ENCODE measurements at regions of chrX and their contacts with region 1.

Region 1: GRCh38 chrX:57453901-57454300 is 137.9 kb upstream of the ZXDB start:
- DNase-seq: peak; percentile 51
- H3K4me3 Mint-ChIP-seq: no peak overlapping the region
- H3K27ac Mint-ChIP-seq: no peak overlapping the region
- H3K4me1 Mint-ChIP-seq: no peaks in the 10 kb centered on the region
- H3K27me3 Mint-ChIP-seq: peaks cover 21% of the 10 kb centered on the region
- CTCF ChIP-seq: peak; percentile 52

Region 2: DNA sequence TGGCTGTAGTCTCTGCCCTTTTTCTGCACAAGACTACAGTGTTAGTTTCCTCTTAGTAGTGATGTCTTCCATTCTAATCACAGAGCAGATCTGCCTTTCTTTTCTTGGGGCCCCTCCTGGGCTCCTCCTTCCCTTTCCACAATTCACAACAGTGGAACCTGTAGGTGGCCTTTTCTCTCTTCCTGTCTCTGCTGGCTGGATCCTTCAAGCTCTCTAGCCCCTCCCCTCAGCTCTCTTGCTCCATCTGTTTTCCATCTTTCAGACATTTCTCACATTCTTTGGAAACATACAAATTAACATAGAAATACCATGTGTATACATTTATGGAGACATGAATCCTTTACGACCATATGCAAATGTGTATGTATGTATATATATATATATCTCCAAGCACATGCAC is 316.4 kb before region 1 on chrX:
- CTCF ChIA-PET with region 1: no interaction called
- POLR2A ChIA-PET with region 1: no interaction called
- intact Hi-C with region 1: no loop called
- DNase-seq: no peak
- H3K4me3 Mint-ChIP-seq: no peak overlapping the region
- H3K27ac Mint-ChIP-seq: peak overlapping the region; percentile 21
- H3K4me1 Mint-ChIP-seq: peaks cover 6% of the 10 kb centered on the region
- H3K27me3 Mint-ChIP-seq: peaks cover 21% of the 10 kb centered on the region
- CTCF ChIP-seq: no peak

Region 3: GRCh38 chrX:57156397-57157049 is 297.4 kb before region 1 on chrX:
- CTCF ChIA-PET with region 1: interaction called, 7 read pairs
- POLR2A ChIA-PET with region 1: no interaction called
- intact Hi-C with region 1: loop called (anchors 1 kb)
- DNase-seq: peak; percentile 51
- H3K4me3 Mint-ChIP-seq: no peak overlapping the region
- H3K27ac Mint-ChIP-seq: no peak overlapping the region
- H3K4me1 Mint-ChIP-seq: no peaks in the 10 kb centered on the region
- H3K27me3 Mint-ChIP-seq: peaks cover 18% of the 10 kb centered on the region
- CTCF ChIP-seq: peak; percentile 37

Region 4: DNA sequence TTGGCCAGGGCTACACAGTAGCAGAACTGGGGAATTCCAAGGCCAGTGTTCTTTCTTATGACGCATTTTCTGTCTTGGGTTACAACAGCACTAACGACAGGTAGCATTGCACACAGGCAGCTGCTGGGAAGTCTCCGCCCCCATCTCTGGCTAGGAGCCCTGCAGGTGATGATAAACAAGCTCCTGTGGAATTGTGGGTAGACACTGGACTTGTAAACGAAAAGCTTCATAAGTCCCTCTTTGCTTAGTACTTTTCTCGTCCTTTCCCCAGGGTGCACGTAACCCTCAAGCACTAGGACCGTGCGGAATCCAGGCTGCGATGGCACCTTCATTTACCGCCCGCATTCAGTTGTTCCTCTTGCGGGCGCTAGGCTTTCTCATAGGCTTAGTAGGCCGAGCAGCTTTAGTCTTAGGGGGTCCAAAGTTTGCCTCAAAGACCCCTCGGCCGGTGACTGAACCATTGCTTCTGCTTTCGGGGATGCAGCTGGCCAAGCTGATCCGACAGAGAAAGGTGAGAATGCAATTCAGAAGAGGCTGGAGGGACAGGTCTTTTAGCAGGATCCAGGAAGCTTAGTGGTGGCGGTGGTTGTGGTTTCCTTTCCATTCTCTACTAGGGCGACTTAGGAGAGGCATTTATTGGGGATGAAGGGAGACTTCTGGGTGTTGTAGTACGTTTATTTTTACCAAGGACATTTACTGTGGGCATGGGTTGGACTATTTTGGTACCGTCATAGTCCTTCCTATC is 167.2 kb before region 1 on chrX and contains the start of gene FAAH2:
- CTCF ChIA-PET with region 1: interaction called, 4 read pairs
- POLR2A ChIA-PET with region 1: no interaction called
- intact Hi-C with region 1: loop called (anchors 1 kb)
- DNase-seq: peak; percentile 89
- H3K4me3 Mint-ChIP-seq: peak within 1 kb of the TSS; percentile 89
- H3K27ac Mint-ChIP-seq: peak within 1 kb of the TSS; percentile 89
- H3K4me1 Mint-ChIP-seq: peaks cover 16% of the 10 kb centered on the region
- H3K27me3 Mint-ChIP-seq: peaks cover 47% of the 10 kb centered on the region
- CTCF ChIP-seq: no peak
- total RNA-seq, gene FAAH2: 1.7 and 3.1 TPM in 2 replicates

Measured in MCF 10A (cell line).